ENCODE measurements at regions of chr6 and their contacts with region 1.

Region 1: GRCh38 chr6:146857180-146857979 is 258.6 kb downstream of the ADGB start:
- DNase-seq: peak; percentile 81 to 98 (median 89)

Region 2: DNA sequence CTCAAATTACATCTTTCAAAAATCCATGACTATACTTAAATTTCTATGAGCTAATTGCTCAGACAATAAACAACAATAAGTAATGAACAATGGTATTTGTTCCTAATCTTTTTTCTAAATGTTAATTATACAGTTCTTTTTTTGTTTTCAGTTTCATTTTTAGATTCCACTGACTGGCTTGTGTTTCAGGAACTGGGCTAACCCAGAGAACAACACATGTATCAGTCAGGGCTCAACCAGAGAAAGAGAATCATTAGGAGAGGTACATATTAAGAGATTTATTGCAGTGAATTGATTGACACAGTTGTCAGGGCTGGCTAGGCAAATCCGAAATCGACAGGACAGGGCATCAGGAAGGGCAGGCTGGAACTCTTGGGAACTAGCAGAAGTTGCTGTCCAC is 645.7 kb before region 1 on chr6:
- intact Hi-C with region 1: no loop called
- DNase-seq: no peak

Region 3: DNA sequence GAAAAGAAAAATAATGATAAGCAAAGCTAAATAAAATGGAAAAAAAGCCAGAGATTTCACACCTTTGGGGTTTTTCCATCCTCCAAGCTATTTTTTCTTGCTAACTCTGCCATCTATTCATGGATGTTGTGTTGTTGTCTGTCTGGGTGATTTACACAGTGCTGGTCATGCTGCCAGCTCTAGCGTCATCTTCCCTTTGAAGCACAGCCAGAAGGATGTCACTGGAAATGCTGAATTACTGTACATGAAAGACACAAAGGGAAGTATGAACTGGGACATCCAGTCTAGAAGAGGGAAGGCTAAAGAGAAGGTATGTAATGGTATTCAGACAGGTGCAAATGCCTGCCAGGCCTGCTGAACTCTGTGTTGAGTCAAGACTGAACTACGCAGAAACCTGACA is 104.9 kb after region 1 on chr6:
- intact Hi-C with region 1: no loop called
- DNase-seq: no peak

Region 4: DNA sequence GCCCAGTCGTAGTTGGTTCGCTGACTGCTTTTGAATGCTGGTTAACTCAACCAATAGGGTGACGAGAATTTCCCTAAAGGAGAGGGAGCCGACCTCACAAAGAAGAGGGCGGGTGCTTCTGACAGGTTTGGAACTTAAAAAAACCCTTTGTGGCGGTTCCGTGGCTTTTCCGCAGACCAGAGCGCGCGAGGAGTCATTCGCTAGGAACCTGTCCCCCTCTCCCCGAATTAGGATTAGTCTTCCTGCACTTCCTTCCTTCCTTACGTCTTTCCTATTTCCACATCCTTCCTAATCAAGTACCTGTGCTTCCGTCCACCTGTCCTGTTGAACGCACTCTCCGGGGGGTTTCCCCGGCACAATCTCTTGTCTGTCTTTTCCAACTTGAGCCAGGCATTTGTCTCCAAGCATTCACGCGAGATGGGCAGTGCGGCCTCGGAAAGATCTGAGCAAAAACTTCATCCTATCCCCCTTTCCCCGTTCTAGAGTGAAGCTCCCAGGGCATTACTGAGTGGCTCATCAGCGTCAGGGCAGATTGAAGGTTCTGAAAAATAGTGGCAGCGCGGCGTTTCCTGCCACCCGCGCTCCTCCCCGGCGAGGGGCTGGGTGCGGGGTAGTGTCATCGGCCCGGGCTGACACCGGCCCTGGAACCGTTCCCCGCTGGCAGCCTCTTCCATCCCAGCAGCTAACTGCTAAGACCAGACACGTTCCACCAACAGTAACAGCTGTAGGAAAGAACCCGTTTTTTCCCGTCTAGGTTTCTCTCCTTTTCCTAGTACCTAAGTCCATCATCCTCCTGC is 345.3 kb after region 1 on chr6:
- intact Hi-C with region 1: loop called (anchors 5 kb)
- DNase-seq: peak; percentile 74 to 97 (median 81)

Region 5: DNA sequence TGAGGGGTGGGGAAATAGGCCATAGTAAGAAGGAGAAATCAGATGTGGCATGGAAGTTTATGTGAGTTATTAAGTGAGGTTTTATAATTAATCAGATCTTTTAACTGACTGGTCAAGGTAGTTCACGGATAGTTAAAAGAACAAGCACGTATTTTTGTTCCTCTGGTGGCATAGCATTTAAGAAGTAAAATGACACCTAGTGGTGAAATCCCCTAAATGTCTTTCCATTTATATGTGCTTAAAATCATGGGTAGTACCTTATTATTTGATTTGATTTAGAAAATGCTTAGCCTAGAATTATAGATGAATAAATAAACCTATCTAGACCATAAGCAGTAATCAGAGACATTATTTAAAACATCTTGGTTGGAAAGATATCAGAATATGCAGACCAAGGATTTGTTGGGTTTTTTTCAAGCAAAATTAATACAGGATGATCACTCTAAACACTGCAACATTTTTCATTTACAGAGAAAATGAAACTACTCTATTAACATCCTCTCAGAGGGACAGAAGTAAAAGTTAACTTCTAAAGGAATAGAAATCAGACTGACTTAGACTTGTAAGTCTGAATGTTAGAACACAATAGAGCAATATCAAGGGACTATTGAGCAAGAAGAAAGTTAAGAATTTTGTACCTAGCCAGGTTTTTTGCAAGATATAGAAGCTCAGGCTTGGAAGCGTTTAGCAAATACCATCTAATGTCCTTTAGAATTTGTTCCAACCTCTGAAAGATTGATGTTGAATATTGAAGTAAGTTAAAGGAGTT is 427.9 kb after region 1 on chr6:
- intact Hi-C with region 1: loop called (anchors 1 kb)
- DNase-seq: no peak

Region 6: GRCh38 chr6:148166339-148166968 is 1309.1 kb after region 1 on chr6:
- intact Hi-C with region 1: loop called (anchors 5 kb)
- DNase-seq: no peak

Measured in posterior cingulate gyrus (tissue), 11 donors.